A549 (cell line): ENCODE measurements at regions of chr17 and their contacts with region 1.

Region 1: DNA sequence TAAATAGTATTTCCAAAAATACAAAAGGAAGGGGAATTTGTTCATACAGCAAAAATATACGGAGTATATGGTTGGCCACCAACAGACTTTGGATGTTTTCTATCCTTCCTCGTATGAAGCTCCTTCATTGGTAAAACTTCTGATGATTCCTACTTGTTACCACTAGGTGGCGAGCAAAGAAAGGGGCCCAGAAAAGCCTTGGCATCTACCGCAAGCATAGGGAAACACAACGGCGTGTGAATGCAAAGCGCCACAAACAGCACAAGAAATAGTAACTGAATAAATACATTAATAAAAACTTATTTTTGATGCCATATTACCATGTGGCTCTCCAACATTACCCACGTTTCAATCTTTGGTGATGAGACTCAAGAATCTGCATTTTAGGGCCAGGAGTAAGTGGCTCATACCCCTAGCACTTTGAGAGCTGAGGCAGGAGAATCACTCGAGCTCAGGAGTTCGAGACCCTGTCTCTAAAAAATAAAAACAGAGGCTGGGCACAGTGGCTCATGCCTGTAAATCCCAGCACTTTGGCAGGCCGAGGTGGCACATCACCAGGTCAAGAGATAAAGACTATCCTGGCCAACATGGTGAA is 34.5 kb downstream of the YWHAE start:
- DNase-seq: peak; percentile 82 to 87
- ATAC-seq: peak; percentile 82 to 84
- H3K4me3 ChIP-seq: no peak overlapping the region
- H3K27ac ChIP-seq: peak overlapping the region in 1 of 2 experiments; percentile 25; a peak in 2 of 6 replicates
- H3K4me1 ChIP-seq: peaks cover 70% of the 10 kb centered on the region
- CTCF ChIP-seq: peak; percentile 96
- EP300 ChIP-seq: no peak
- POLR2A ChIP-seq: no peak
- RAD21 ChIP-seq: peak; percentile 84 to 88

Region 2: DNA sequence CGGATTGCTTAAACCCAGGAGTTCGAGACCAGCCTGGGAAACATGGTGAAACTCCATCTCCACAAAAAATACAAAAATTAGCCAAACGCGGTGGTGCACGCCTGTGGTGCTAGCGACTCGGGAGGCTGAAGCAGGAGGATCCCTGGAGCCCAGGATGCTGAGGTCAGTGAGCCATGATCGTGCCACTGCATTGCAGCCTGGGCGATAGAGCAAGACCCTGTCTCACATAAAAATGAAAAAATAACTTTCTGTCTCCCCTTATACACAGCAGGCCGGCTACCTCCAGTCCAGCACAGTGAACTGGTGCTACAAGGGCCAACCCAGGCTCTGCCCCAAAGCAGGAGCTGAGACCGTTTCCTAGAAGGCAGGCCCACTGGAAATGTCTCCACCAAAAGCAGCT is 25.2 kb before region 1 on chr17:
- CTCF ChIA-PET with region 1: interaction called, 19 read pairs
- POLR2A ChIA-PET with region 1: interaction called, 5 read pairs
- DNase-seq: no peak
- ATAC-seq: peak; percentile 43 to 52; a peak in 5 of 6 replicates
- H3K4me3 ChIP-seq: no peak overlapping the region
- H3K27ac ChIP-seq: no peak overlapping the region
- H3K4me1 ChIP-seq: no peaks in the 10 kb centered on the region
- CTCF ChIP-seq: no peak
- EP300 ChIP-seq: no peak
- POLR2A ChIP-seq: no peak
- RAD21 ChIP-seq: no peak

Region 3: DNA sequence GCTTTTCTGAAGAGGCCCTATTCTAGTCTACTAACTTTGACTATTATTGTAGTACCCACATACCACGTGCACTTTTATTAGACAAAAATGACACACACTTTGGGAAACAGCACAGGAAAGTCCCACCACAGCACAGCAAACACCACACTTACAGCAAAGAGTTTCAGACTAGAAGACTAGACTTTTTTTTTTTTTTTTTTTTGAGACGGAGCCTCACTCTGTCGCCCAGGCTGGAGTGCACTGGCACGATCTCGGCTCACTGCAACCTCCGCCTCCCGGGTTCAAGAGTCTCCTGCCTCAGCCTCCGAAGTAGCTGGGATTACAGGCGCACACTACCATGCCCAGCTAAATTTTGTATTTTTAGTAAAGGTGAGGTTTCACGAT is 14.4 kb after region 1 on chr17:
- CTCF ChIA-PET with region 1: interaction called, 123 read pairs
- POLR2A ChIA-PET with region 1: no interaction called
- DNase-seq: no peak
- ATAC-seq: no peak
- H3K4me3 ChIP-seq: no peak overlapping the region
- H3K27ac ChIP-seq: no peak overlapping the region
- H3K4me1 ChIP-seq: peaks cover 56% of the 10 kb centered on the region
- CTCF ChIP-seq: no peak
- EP300 ChIP-seq: no peak
- POLR2A ChIP-seq: no peak
- RAD21 ChIP-seq: no peak

Region 4: DNA sequence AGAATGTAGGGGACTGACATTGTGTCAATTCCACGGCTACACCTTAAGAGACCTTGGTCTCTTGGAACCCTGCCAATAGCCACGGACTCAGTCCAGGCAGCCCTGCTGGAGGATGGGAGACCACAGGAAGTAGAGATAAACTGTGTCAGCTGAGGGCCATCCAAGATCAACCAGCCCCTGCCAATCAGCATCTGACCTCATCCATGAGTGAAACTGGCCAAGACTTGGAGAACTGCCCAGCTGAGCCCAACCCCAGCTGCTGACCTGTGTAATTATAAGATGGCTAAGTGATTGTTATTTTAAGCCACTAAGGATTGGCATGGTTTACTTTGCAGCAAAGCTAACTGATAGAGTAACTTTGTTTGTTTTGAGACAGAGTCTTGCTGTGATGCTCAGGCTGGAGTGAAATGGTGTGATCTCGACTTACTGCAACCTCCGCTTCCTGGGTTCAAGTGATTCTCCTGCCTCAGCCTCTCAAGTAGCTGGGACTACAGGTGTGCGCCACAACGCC is 47.8 kb after region 1 on chr17:
- CTCF ChIA-PET with region 1: interaction called, 10 read pairs
- POLR2A ChIA-PET with region 1: no interaction called
- DNase-seq: peak in 1 of 2 experiments; percentile 55
- ATAC-seq: peak; percentile 17 to 45; a peak in 4 of 6 replicates
- H3K4me3 ChIP-seq: no peak overlapping the region
- H3K27ac ChIP-seq: no peak overlapping the region
- H3K4me1 ChIP-seq: no peaks in the 10 kb centered on the region
- CTCF ChIP-seq: no peak
- EP300 ChIP-seq: no peak
- POLR2A ChIP-seq: no peak
- RAD21 ChIP-seq: no peak

Region 5: GRCh38 chr17:1438593-1439083 is 73.1 kb after region 1 on chr17:
- CTCF ChIA-PET with region 1: interaction called, 22 read pairs
- POLR2A ChIA-PET with region 1: no interaction called
- DNase-seq: peak in 1 of 2 experiments; percentile 66
- ATAC-seq: peak; percentile 70 to 74; a peak in 5 of 6 replicates
- H3K4me3 ChIP-seq: no peak overlapping the region
- H3K27ac ChIP-seq: peak overlapping the region; percentile 48 to 76
- H3K4me1 ChIP-seq: peaks cover 15% of the 10 kb centered on the region
- CTCF ChIP-seq: no peak
- EP300 ChIP-seq: no peak
- POLR2A ChIP-seq: no peak
- RAD21 ChIP-seq: no peak

Region 6: DNA sequence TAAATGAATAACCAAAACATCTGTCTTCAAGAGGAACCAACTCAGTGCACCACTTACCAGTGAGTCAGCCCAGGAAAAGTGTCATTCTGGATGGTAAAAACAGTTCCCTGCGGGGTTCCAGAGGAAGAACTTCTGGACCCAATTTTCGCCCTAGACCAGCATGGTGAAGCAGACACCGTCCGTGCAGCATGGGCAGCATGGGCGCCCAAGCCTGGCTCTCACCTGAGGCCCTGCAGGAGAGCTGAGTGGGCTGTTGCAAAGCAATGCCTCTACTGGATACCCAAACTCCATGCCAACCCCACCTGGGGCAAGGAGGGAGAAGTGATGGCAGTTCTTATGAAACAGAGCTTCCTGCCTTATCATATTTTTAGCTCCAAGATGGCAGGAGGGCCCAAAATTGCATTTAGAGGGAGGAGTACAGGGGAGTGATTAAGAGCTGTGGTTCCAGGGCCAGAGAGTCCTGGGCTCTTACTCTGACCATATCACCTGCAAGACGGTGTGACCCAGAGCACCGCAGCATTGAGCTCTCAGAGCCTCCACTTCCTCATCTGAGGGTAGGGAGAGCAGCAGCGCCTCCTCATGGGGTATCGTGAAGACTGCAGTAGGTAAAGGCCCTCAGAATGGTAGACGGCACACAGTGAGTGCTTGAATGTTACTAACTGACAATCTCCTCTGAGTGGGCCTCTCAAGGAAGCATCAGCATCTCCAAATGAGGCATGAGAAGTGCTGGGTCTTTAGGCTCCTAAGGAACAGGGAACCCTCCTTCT is 167.5 kb after region 1 on chr17:
- CTCF ChIA-PET with region 1: interaction called, 12 read pairs
- POLR2A ChIA-PET with region 1: no interaction called
- DNase-seq: peak in 1 of 2 experiments; percentile 62
- ATAC-seq: peak; percentile 63 to 84; a peak in 5 of 6 replicates
- H3K4me3 ChIP-seq: no peak overlapping the region
- H3K27ac ChIP-seq: no peak overlapping the region
- H3K4me1 ChIP-seq: peaks cover 3% of the 10 kb centered on the region; the same call in 1 of the 3 replicates
- CTCF ChIP-seq: peak; percentile 25; the same call in 1 of the 3 replicates
- EP300 ChIP-seq: no peak
- POLR2A ChIP-seq: no peak
- RAD21 ChIP-seq: peak in 1 of 2 experiments; percentile 35; a peak in 2 of 5 replicates